Adrenal gland (tissue), 19 donors: ENCODE measurements at regions of chr2 and their contacts with region 1.

Region 1: DNA sequence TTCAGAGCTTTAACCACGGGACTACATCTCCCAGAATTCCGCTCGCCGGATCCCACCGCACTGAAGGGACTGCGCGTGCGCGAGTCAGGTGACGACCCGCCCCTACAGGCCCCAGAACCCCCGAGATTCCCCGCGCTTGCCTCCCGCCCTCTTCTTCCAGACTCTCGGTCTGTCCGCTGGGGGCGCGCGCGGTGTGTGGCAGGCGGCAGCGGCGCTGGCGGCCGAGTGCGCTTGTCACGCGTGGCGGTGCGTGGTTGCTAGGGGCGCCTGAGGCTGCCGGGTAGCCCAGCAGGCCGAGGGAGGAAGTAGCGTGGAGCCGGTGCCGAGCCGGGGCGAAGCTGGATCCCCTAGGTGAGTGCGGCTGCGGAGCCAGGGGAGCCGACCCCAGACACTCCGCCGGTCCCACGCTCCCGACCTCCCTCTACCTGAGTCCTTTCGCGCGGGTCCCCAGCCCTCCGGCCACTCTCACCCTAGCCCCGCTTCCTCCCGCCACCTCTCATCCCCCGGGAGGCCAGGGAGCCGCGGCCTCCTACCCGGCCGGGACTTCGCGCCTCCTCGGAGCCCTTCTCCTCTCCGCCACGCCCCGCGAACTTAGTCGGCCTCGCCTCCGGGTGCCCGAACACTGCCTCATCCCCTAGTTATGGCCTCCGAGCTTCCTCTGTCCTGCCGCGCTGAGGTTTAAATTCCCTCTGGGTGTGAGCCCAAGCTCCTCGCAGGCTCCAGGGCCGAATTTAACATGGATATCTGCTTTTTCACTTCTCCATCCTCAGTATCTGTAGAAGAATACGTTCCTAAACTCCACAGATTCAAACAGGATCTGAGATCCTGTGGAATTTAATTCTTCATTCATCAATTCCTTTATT is at the start of gene TTLL4:
- DNase-seq: peak; percentile 99
- H3K4me3 ChIP-seq: peak within 1 kb of the TSS in 3 of 4 donors; percentile 2 to 91 (median 76)
- H3K27ac ChIP-seq: peak within 1 kb of the TSS; percentile 73 to 97 (median 90)
- H3K4me1 ChIP-seq: peaks cover 4 to 37% of the 10 kb centered on the region in 2 donors
- H3K27me3 ChIP-seq: no peaks in the 10 kb centered on the region
- CTCF ChIP-seq: peak; percentile 78 to 97 (median 88)
- POLR2A ChIP-seq: peak; percentile 24 to 79
- total RNA-seq, gene TTLL4: 10.6 to 51.4 (median 20.5) TPM

Region 2: DNA sequence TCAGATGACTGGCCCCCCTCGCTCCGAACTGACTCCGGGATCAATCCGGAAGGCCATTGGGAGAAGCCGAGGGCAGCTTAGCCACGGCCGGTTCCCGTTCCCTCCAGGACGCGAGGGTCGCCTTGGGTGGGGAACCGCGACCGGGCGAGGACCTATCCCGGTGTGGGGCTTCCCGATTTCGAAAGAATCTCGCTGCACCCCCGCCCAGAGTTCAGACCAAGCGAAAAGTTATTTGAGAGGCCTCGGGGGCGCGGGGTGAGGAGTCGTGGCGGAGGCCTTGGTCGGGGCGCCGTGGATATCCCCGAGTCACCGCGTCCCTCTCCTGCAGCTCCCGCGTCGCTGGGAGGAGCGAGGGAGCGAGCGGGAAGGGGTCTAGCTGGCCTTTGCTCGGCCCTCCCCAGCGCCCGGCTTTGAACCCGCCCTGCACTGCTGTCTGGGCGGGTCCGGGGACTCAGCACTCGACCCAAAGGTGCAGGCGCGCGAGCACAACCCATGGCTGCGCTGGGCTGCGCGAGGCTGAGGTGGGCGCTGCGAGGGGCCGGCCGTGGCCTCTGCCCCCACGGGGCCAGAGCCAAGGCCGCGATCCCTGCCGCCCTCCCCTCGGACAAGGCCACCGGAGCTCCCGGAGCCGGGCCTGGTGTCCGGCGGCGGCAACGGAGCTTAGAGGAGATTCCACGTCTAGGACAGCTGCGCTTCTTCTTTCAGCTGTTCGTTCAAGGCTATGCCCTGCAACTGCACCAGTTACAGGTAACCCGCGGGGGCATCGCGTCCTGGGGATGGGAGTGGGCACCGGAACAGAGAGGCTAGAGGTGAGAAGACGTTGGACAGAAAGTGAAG is 71.0 kb after region 1 on chr2 and contains the start of gene CYP27A1:
- intact Hi-C with region 1: loop called in 1 of 2 experiments (anchors 10 kb)
- DNase-seq: peak; percentile 61 to 71 (median 63)
- H3K4me3 ChIP-seq: peak within 1 kb of the TSS; percentile 9 to 87 (median 66)
- H3K27ac ChIP-seq: peak within 1 kb of the TSS in 4 of 5 donors; percentile 46 to 89 (median 74)
- H3K4me1 ChIP-seq: peaks cover 9 to 25% of the 10 kb centered on the region in 2 donors
- H3K27me3 ChIP-seq: no peaks in the 10 kb centered on the region
- CTCF ChIP-seq: no peak
- POLR2A ChIP-seq: peak; percentile 12 to 67
- total RNA-seq, gene CYP27A1: 30.9 to 124 (median 96.1) TPM

Region 3: DNA sequence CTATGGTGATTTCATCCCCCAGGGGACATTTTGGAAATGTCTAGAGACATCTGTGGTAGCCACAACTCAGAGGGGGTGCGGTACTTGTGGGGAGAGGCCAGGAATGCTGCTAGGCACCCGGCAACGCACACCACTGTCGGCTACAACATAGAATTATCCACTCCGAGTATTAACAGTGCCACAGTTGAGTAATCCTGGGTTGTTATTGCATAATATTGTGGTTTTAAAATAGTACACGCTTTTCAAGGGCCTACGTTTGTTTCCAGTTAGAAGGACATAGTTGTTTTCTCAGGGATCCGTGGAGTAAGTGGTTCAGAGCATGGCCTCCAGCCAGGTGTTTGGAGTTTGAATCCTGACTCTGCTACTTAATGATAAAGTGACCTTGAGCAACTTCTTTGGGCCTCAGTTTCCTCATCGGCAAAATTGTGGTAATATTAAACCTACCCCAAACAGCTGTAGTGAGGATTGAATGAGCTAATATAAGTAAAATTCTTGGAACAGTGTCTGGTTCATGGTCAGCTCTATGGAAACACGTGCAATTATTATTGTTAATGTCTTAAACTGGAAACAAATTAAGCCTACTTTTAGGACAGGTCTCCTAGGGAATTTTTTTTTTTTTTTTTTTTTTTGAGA is 95.5 kb after region 1 on chr2:
- intact Hi-C with region 1: no loop called
- DNase-seq: peak; percentile 44 to 79 (median 71)
- H3K4me3 ChIP-seq: no peak overlapping the region
- H3K27ac ChIP-seq: peak overlapping the region in 4 of 5 donors; percentile 20 to 79 (median 70)
- H3K4me1 ChIP-seq: peaks cover 10 to 19% of the 10 kb centered on the region in 2 donors
- H3K27me3 ChIP-seq: no peaks in the 10 kb centered on the region
- CTCF ChIP-seq: no peak
- POLR2A ChIP-seq: peak in 1 of 2 donors; percentile 38